Common myeloid progenitor, CD34-positive (primary cell): ENCODE measurements at regions of chr1 and their contacts with region 1.

Region 1: GRCh38 chr1:15741183-15741850 is 982 bp upstream of the TMEM82 start:
- DNase-seq: peak; percentile 39 to 66 (median 63)
- H3K4me3 ChIP-seq: no peak overlapping the region
- H3K27ac ChIP-seq: no peak overlapping the region
- H3K4me1 ChIP-seq: peaks cover 0 to 3% (median 0%) of the 10 kb centered on the region in 4 experiments
- H3K27me3 ChIP-seq: no peaks in the 10 kb centered on the region

Region 2: DNA sequence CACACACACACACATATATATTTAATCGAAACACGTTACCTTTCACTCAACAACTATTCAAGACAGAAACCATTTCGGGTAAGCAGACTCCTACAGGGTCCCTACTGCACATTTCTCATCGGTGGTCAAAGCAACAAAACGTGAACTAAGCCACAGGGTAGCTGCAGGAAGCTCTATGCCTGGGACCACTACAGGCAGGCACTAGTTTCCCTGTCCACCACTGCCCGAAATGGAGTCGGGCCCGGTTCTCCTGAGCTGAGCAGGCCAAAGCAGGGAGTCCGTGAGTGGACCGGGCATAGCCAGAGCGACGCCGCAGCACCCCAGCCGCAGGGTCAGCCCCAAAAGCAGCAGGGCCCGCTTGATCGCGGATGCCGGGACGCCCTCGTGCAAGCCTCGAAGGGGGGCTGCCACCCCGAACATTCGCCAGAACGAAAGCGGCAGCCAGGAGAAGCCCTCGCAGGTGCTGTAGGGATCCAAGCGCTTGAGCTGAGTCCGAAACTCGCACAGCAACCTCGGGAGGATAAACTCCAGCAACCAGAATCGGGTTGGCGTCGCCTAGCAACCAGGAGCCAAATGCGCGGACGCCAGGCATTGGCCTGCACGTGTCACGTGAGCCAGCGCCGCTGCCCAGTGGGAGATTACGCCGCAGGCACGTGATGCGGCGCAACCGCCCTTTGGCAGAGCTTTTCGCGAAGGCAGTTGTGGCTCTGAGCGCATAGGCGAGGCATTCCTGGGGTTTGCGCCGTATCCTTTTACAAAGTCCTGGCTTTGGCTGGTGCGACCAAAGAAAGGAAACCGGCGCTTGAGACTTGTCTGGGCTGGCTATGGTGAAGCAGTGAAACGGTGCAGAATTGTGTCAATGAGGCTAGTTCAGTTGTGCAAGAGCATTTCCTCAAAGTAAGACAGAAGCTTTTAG is 138.0 kb before region 1 on chr1:
- CTCF ChIA-PET with region 1: interaction called, 69 read pairs
- POLR2A ChIA-PET with region 1: no interaction called
- DNase-seq: peak; percentile 94 to 97 (median 96)
- H3K4me3 ChIP-seq: peak overlapping the region; percentile 29 to 92 (median 72)
- H3K27ac ChIP-seq: peak overlapping the region in 1 of 2 experiments; percentile 77
- H3K4me1 ChIP-seq: peaks cover 0 to 11% (median 7%) of the 10 kb centered on the region in 4 experiments
- H3K27me3 ChIP-seq: peaks cover 0 to 2% (median 0%) of the 10 kb centered on the region in 5 experiments

Region 3: GRCh38 chr1:15761366-15762128 is 20.2 kb after region 1 on chr1:
- CTCF ChIA-PET with region 1: no interaction called
- POLR2A ChIA-PET with region 1: no interaction called
- DNase-seq: peak in 1 of 3 donors; percentile 29
- H3K4me3 ChIP-seq: no peak overlapping the region
- H3K27ac ChIP-seq: no peak overlapping the region
- H3K4me1 ChIP-seq: peaks cover 0 to 13% (median 6%) of the 10 kb centered on the region in 4 experiments
- H3K27me3 ChIP-seq: peaks cover 0 to 64% (median 30%) of the 10 kb centered on the region in 5 experiments